ENCODE measurements at regions of chr9 and their contacts with region 1.

Region 1: DNA sequence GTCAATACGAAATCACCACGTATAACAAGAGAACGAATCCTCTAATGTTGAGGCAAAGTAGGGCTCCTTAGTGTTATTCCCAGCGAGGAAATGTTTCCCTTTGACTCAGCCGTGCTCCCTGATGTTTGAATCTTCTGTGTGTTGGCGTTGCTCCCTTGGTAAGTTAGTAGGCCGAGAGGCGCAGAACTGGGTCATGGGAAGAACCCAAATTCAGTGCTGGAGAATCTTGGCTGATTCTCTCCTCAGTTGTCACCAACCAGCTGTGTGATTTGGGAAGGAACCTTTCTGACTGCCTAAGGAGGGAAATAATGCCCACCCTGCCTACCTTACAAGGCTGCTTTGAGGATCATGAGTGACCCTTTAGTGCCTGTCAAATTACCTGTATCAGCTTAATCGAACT is 22.5 kb downstream of the PRKACG start:
- DNase-seq: no peak
- H3K4me3 ChIP-seq: no peak overlapping the region
- H3K27ac ChIP-seq: no peak overlapping the region
- H3K4me1 ChIP-seq: no peaks in the 10 kb centered on the region
- H3K27me3 ChIP-seq: no peaks in the 10 kb centered on the region
- CTCF ChIP-seq: no peak
- EP300 ChIP-seq: no peak
- POLR2A ChIP-seq: no peak

Region 2: GRCh38 chr9:70127540-70128416 is 1136.3 kb after region 1 on chr9:
- in situ Hi-C with region 1: no loop called
- intact Hi-C with region 1: loop called (anchors 5 kb)
- DNase-seq: no peak
- H3K4me3 ChIP-seq: no peak overlapping the region
- H3K27ac ChIP-seq: no peak overlapping the region
- H3K4me1 ChIP-seq: no peaks in the 10 kb centered on the region
- H3K27me3 ChIP-seq: no peaks in the 10 kb centered on the region
- CTCF ChIP-seq: no peak
- EP300 ChIP-seq: no peak
- POLR2A ChIP-seq: no peak